ENCODE measurements at regions of chr11 and their contacts with region 1.

Region 1: DNA sequence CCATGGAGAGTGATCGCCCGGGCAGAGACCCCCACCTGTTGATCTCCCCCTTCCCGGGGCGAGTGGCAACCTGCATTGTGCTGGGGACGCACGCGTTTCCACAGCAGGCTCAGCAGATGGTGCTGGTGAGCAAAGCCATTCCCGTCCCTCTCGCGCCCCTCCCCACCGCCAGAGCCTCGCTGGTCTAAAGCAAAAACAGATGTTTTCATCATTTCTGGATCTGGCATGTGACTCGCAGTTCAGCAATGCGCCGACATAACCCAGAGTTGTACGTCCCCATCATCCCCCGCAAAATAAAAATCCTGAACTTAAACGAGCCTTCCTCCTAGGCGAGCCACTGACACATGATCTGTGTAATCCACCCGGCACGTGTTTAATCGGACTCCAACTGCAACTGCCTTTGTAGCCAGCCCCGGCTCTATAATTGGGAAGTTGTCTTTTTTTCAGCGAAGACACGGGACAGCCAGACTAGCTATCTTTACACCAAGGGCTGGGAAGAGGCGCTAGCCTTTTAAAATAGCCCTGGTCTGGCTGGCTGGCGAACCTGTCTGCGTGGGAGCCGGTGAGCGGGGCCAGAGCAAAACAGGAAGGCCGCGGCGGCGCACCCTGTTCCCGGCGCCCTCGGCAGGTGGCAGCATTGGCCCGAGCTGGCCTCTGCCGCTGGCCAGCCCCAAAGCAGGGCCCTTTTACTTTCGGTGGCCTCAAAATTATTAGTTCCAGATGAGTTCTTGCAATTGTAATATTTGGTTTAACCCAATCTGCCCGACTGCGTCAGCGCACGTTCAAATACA is 203.0 kb upstream of the SORL1-AS1 start:
- DNase-seq: peak; percentile 79
- H3K4me3 ChIP-seq: peak overlapping the region; percentile 28
- H3K27ac ChIP-seq: peak overlapping the region; percentile 39
- H3K4me1 ChIP-seq: no peaks in the 10 kb centered on the region
- H3K27me3 ChIP-seq: no peaks in the 10 kb centered on the region
- CTCF ChIP-seq: peak; percentile 77

Region 2: DNA sequence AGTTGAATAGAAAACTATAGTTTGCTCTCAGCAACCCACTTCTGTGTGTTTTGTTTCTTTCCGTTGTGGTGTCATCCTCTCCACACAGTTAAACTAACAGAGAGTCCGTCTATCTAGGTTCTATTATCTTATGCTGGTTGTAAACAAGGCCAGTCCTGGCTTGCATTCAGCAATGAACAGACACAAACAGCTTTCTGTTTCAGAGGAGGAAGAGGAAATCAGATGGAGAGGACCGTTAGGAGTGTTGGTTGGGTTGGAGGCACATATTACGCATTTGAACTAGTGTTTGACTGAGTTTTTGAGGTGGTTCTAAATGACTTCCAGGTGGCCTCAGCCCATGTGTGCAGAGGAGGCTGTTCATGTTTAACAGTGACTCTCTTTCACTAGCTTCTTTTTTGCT is 73.4 kb before region 1 on chr11:
- intact Hi-C with region 1: no loop called
- DNase-seq: no peak
- H3K4me3 ChIP-seq: no peak overlapping the region
- H3K27ac ChIP-seq: no peak overlapping the region
- H3K4me1 ChIP-seq: no peaks in the 10 kb centered on the region
- H3K27me3 ChIP-seq: no peaks in the 10 kb centered on the region
- CTCF ChIP-seq: no peak

Region 3: GRCh38 chr11:122101625-122102291 is 446.0 kb after region 1 on chr11:
- intact Hi-C with region 1: loop called (anchors 2 kb)
- DNase-seq: peak; percentile 28
- H3K4me3 ChIP-seq: peak overlapping the region; percentile 1
- H3K27ac ChIP-seq: peak overlapping the region; percentile 17
- H3K4me1 ChIP-seq: no peaks in the 10 kb centered on the region
- H3K27me3 ChIP-seq: no peaks in the 10 kb centered on the region
- CTCF ChIP-seq: peak; percentile 15

Region 4: DNA sequence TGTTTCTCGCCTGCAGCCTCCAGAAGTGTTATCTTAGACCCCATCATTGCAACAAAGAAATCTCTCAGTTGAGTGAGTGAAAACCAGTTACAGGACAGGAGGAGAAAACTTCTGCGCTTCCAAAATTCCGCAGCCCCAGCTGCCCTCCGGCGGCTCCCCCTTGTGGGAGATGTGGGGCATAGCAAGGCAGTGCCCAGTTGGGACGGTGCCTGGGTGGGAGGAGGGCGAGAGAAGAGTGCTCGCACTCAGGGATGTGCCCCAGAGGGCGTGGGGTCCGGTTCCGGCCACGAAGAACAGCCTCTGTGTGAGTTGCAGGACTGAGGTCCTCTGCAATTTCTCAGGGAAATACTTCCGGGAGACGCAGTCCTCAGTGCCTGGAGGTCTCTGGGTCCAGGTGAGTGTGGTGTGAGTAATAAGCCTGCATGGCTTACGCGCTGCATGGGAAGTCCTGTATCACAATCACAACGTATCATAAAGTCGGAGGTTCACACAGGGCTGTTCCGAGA is 547.3 kb after region 1 on chr11:
- intact Hi-C with region 1: loop called (anchors 5 kb)
- DNase-seq: peak; percentile 51
- H3K4me3 ChIP-seq: no peak overlapping the region
- H3K27ac ChIP-seq: no peak overlapping the region
- H3K4me1 ChIP-seq: peaks cover 7% of the 10 kb centered on the region
- H3K27me3 ChIP-seq: no peaks in the 10 kb centered on the region
- CTCF ChIP-seq: peak; percentile 92

Region 5: GRCh38 chr11:122505304-122506006 is 849.7 kb after region 1 on chr11:
- intact Hi-C with region 1: loop called (anchors 5 kb)
- DNase-seq: peak; percentile 66
- H3K4me3 ChIP-seq: no peak overlapping the region
- H3K27ac ChIP-seq: no peak overlapping the region
- H3K4me1 ChIP-seq: no peaks in the 10 kb centered on the region
- H3K27me3 ChIP-seq: no peaks in the 10 kb centered on the region
- CTCF ChIP-seq: peak; percentile 75

Measured in colonic mucosa (tissue), 4 donors.